Astrocyte of the cerebellum (primary cell): ENCODE measurements at regions of chr14 and their contacts with region 1.

Region 1: DNA sequence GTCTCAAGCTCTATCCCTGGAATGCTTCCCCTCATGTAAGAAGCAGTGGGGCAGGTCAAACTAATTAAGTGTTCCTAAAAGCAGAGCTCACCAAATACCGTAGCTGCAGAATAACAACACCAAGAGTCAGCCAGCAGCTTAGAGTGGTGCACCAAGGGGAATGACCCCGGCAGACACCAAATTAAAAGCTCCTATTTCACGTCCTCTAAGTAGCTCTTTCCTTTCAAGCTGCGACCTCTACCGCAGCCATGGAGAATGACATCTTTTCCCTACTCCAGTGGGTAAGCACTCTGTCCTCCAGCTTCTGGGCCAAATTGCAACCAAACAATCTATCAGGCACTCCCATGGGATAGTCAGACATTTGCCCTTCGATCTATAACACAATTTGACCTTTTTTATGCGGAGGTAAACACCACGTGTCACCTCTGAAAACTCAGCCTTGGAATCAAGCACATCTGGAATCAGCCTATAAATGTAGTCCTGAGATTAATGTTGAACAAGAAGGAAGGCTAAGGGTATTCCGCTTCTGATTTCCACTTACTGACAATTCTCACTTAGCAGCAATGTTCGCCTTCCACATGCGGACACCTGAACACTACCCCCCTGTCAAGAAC is 67.6 kb upstream of the CDKN3 start:
- DNase-seq: peak; percentile 74
- H3K4me3 ChIP-seq: no peak overlapping the region
- CTCF ChIP-seq: peak; percentile 88

Region 2: GRCh38 chr14:53539489-53540126 is 789.6 kb before region 1 on chr14:
- in situ Hi-C with region 1: loop called (anchors 25 kb)
- DNase-seq: peak; percentile 83
- H3K4me3 ChIP-seq: no peak overlapping the region
- CTCF ChIP-seq: peak; percentile 91

Region 3: GRCh38 chr14:53814392-53814791 is 514.8 kb before region 1 on chr14:
- in situ Hi-C with region 1: loop called (anchors 25 kb)
- DNase-seq: no peak
- H3K4me3 ChIP-seq: no peak overlapping the region
- CTCF ChIP-seq: no peak

Region 4: GRCh38 chr14:53963320-53964227 is 365.6 kb before region 1 on chr14:
- in situ Hi-C with region 1: loop called (anchors 5 kb)
- DNase-seq: no peak
- H3K4me3 ChIP-seq: peak overlapping the region; percentile 31
- CTCF ChIP-seq: peak; percentile 65

Region 5: DNA sequence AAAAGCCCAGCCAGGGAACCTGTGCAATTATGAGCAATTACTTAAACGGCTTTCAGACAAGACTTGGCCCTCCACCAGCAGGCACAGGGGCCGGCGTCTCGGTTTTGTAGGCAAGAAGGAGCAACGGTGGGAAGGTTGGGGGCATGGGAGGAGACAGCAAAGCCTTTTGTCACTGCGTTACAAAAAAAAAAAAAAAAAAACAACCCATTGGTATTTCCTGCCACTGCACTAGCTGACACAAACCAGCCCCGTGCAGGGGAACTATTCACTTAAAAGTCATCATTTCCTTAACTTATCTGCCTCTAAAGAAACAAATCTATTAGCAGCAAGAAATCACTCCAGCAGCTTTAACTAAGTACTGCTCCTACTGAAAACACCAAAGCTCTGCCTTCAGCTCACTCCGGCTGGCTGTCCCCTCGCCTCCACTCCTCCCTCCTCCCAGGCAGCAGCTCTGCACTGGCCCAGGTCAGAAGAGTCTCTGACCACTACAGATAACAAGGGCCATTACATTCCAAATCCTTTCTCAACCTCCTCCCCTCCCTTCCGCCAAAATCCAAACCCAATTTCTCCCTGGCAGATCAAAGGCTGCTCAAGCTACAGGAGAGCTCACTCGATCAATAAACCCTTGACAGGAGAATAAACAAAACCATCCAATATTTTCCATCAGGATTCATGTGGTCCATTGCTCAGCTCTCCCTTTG is 37.5 kb before region 1 on chr14:
- in situ Hi-C with region 1: no loop called
- DNase-seq: no peak
- H3K4me3 ChIP-seq: no peak overlapping the region
- CTCF ChIP-seq: no peak